ENCODE measurements at regions of chr11 and their contacts with region 1.

Region 1: GRCh38 chr11:119666463-119667131 is 62.4 kb downstream of the NECTIN1 start:
- DNase-seq: peak; percentile 18
- ATAC-seq: peak; percentile 99
- H3K4me3 ChIP-seq: no peak overlapping the region
- H3K27ac ChIP-seq: no peak overlapping the region
- H3K4me1 ChIP-seq: no peaks in the 10 kb centered on the region
- H3K27me3 ChIP-seq: no peaks in the 10 kb centered on the region
- CTCF ChIP-seq: peak; percentile 85 to 89 (median 88)
- POLR2A ChIP-seq: no peak
- RAD21 ChIP-seq: peak; percentile 99

Region 2: GRCh38 chr11:119481021-119481666 is 185.5 kb before region 1 on chr11:
- CTCF ChIA-PET with region 1: no interaction called
- POLR2A ChIA-PET with region 1: no interaction called
- RAD21 ChIA-PET with region 1: no interaction called
- intact Hi-C with region 1: loop called (anchors 5 kb)
- DNase-seq: no peak
- ATAC-seq: peak; percentile 86
- H3K4me3 ChIP-seq: no peak overlapping the region
- H3K27ac ChIP-seq: no peak overlapping the region
- H3K4me1 ChIP-seq: peaks cover 3 to 22% of the 10 kb centered on the region in 2 experiments; a peak in 3 of 4 replicates
- H3K27me3 ChIP-seq: no peaks in the 10 kb centered on the region
- CTCF ChIP-seq: peak; percentile 93 to 99 (median 96)
- POLR2A ChIP-seq: no peak
- RAD21 ChIP-seq: peak; percentile 98

Region 3: GRCh38 chr11:119509969-119510401 is 156.6 kb before region 1 on chr11:
- CTCF ChIA-PET with region 1: no interaction called
- POLR2A ChIA-PET with region 1: no interaction called
- RAD21 ChIA-PET with region 1: no interaction called
- intact Hi-C with region 1: no loop called
- DNase-seq: no peak
- ATAC-seq: peak; percentile 69
- H3K4me3 ChIP-seq: no peak overlapping the region
- H3K27ac ChIP-seq: no peak overlapping the region
- H3K4me1 ChIP-seq: peaks cover 0 to 17% of the 10 kb centered on the region in 2 experiments; a peak in 3 of 4 replicates
- H3K27me3 ChIP-seq: no peaks in the 10 kb centered on the region
- CTCF ChIP-seq: no peak
- POLR2A ChIP-seq: no peak
- RAD21 ChIP-seq: no peak

Region 4: GRCh38 chr11:119709638-119710346 is 43.2 kb after region 1 on chr11:
- CTCF ChIA-PET with region 1: no interaction called
- POLR2A ChIA-PET with region 1: no interaction called
- RAD21 ChIA-PET with region 1: no interaction called
- intact Hi-C with region 1: no loop called
- DNase-seq: no peak
- ATAC-seq: no peak
- H3K4me3 ChIP-seq: no peak overlapping the region
- H3K27ac ChIP-seq: no peak overlapping the region
- H3K4me1 ChIP-seq: peaks cover 6% of the 10 kb centered on the region in 2 experiments; a peak in 2 of 4 replicates
- H3K27me3 ChIP-seq: no peaks in the 10 kb centered on the region
- CTCF ChIP-seq: no peak
- POLR2A ChIP-seq: no peak
- RAD21 ChIP-seq: no peak

Region 5: DNA sequence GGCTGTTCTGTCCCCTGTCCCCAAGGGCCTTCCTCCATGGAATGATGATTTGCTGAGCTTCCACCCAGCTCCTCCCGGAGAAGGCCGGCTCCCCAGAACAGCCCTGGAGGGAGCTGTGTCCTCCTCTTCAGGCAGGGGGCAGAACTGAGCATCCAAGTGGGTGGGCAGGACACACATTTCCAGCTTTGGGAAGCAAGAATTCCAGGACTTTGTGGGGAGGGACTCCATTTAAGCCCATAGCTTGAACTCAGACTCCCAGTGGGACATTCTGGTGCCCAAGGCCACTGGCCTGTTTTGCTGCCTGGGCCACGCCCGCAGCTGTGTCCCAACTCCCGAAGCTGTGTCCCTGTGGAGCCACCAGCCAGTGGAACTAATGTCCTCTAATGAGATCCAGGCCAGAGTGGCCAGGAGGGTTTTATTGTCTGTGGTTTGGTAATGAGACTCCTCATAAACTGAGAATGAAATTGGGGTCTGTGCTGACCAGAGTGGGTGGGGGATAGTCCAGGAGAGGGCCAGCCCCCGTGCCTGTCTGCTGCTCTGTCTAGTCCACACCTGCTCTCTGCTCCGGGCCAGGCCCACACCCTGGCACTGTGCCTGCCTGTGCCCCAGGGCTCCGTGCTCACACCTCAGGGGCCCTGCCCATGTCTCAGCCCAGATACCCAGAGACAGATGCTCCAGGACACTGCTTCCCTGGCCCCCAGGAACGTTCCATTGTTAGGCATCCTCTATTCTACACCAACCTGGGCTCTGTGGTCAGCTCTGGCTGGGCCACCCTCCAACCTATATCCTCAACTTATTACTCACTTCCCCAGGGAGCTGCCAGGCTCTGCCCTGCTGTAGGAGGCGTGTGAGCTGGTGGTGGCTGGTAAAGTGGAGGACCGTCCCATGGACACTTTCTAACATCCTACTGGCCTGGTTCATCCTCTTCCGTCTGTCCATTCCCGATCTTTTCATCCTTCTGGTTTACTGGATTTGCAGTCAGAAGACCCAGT is 54.8 kb after region 1 on chr11:
- CTCF ChIA-PET with region 1: no interaction called
- POLR2A ChIA-PET with region 1: no interaction called
- RAD21 ChIA-PET with region 1: no interaction called
- intact Hi-C with region 1: no loop called
- DNase-seq: no peak
- ATAC-seq: peak; percentile 97
- H3K4me3 ChIP-seq: no peak overlapping the region
- H3K27ac ChIP-seq: no peak overlapping the region
- H3K4me1 ChIP-seq: peaks cover 6 to 19% of the 10 kb centered on the region in 2 experiments
- H3K27me3 ChIP-seq: no peaks in the 10 kb centered on the region
- CTCF ChIP-seq: peak; percentile 30 to 75 (median 64); a peak in 5 of 6 replicates
- POLR2A ChIP-seq: no peak
- RAD21 ChIP-seq: no peak

Region 6: DNA sequence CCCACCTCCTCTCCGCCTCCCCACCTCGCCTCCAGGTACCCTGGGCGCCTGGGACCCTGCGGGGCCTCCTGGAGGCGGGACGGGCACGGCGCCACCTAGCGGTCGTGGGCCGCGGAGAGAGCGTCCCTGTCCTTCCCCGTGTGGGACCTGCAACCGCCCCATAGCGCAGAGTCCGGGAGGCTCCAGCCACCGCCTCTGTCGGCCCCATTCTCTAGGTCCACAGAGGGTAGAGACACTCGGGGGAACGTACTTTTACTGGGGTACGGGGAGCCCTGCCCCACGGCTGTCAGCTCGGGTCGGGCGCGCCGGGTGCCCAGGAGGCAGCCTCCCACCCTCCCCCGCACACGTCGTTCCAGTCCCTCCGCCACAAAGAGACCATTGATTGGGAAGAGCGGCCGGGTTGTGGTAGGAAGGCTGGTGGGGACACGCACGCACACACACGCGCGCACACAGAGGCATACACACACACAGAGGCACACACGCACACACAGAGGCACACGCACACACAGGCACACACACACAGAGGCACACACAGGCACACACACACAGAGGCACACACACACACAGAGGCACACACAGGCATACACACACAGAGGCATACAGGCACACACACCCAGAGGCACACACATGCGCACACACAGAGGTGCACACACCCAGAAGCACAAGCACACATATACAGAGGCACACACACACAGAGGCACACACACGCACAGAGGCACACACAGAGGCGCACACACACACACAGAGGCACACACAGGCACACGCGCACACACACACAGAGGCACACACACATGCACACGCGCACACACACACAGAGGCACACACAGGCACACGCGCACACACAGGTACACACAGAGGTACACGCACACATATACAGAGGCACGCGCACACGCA is 75.0 kb after region 1 on chr11:
- CTCF ChIA-PET with region 1: no interaction called
- POLR2A ChIA-PET with region 1: no interaction called
- RAD21 ChIA-PET with region 1: no interaction called
- intact Hi-C with region 1: loop called (anchors 1 kb)
- DNase-seq: no peak
- ATAC-seq: peak; percentile 96
- H3K4me3 ChIP-seq: peak overlapping the region; percentile 33 to 53
- H3K27ac ChIP-seq: no peak overlapping the region; the same call in 1 of the 2 replicates
- H3K4me1 ChIP-seq: peaks cover 0 to 11% of the 10 kb centered on the region in 2 experiments; a peak in 2 of 4 replicates
- H3K27me3 ChIP-seq: no peaks in the 10 kb centered on the region
- CTCF ChIP-seq: peak; percentile 70 to 94 (median 93)
- POLR2A ChIP-seq: no peak
- RAD21 ChIP-seq: peak; percentile 69

Region 7: GRCh38 chr11:120108154-120108865 is 441.7 kb after region 1 on chr11:
- CTCF ChIA-PET with region 1: no interaction called
- POLR2A ChIA-PET with region 1: no interaction called
- RAD21 ChIA-PET with region 1: no interaction called
- intact Hi-C with region 1: loop called (anchors 1 kb)
- DNase-seq: no peak
- ATAC-seq: peak; percentile 97
- H3K4me3 ChIP-seq: no peak overlapping the region
- H3K27ac ChIP-seq: no peak overlapping the region
- H3K4me1 ChIP-seq: no peaks in the 10 kb centered on the region
- H3K27me3 ChIP-seq: peaks cover 20% of the 10 kb centered on the region; the same call in 1 of the 2 replicates
- CTCF ChIP-seq: peak; percentile 94 to 99 (median 99)
- POLR2A ChIP-seq: no peak
- RAD21 ChIP-seq: peak; percentile 99

Region 8: DNA sequence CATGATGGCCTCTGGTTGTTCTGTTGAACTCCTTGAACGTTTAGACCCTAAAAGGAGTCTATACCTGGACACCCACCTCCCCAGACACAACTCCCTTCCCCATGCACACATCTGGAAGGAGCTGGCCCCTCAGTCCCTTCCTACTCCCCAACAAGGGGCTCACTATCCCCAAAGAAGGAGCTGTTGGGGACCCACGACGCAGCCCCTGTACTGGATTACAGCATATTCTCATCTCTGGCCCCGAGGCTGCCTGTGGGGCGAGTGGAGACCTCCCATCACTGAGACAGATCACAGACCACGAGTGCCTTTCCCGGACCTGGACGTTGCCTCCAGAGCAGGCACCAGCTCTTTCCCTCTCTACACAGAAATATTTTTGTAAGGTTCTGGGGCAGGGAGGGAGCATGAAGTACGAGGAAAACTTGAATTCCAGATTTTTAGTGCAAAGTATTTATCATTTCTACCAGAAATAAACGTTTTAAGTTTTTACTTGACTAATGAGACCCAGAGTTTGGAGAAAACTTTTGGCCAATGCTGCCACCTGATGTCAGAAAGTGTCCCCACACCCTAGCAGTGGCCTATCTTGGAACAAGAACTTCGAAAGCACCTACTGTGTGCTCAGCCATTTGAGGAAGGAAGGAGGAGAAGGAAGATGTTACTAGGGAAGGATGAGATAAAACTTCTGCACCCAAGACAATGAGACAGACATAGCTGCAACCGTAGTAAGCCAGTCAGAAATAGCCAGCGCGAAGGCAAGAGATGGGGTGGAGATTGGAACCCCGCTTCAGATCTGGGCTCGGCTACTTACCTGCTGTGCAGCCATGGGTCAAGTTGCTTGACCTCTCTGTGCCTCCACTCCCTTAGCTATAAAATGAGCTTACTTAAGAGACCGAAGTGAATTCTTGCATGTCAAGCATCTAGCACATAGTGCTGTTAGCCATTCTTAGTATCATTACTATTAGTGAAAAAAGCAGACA is 563.1 kb after region 1 on chr11:
- CTCF ChIA-PET with region 1: no interaction called
- POLR2A ChIA-PET with region 1: no interaction called
- RAD21 ChIA-PET with region 1: no interaction called
- intact Hi-C with region 1: loop called (anchors 2 kb)
- DNase-seq: no peak
- ATAC-seq: peak; percentile 59; the same call in 1 of the 2 replicates
- H3K4me3 ChIP-seq: no peak overlapping the region
- H3K27ac ChIP-seq: no peak overlapping the region
- H3K4me1 ChIP-seq: no peaks in the 10 kb centered on the region
- H3K27me3 ChIP-seq: no peaks in the 10 kb centered on the region; the same call in 1 of the 2 replicates
- CTCF ChIP-seq: peak; percentile 68 to 78 (median 72)
- POLR2A ChIP-seq: no peak
- RAD21 ChIP-seq: peak; percentile 85

Measured in HCT116 (cell line).